ENCODE measurements at regions of chr1 and their contacts with region 1.

Region 1: GRCh38 chr1:186363891-186364290 is 11.2 kb downstream of the TPR start:
- DNase-seq: no peak
- H3K4me3 Mint-ChIP-seq: no peak overlapping the region
- H3K27ac Mint-ChIP-seq: no peak overlapping the region
- H3K4me1 Mint-ChIP-seq: peaks cover 32% of the 10 kb centered on the region
- H3K27me3 Mint-ChIP-seq: no peaks in the 10 kb centered on the region

Region 2: DNA sequence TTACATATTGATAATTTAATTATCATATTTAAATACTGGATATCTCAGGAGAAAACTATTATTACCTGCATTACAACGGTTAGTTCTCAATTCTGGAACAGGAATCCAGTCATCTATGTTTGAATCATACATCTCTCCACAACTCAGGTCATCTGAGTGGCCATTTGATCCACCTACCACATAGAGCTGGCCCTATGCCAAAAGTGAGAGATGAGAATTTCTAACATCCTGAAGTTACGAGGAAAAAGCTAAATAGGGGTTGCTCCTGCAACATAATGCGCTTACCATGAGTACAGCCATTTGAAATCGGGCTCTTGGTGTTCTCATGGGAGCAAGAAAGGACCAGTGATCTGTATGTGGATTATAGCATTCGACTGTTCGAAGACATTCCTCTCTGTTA is 1063.7 kb before region 1 on chr1:
- intact Hi-C with region 1: loop called (anchors 5 kb)
- DNase-seq: no peak
- H3K4me3 Mint-ChIP-seq: no peak overlapping the region
- H3K27ac Mint-ChIP-seq: no peak overlapping the region
- H3K4me1 Mint-ChIP-seq: peaks cover 33% of the 10 kb centered on the region
- H3K27me3 Mint-ChIP-seq: no peaks in the 10 kb centered on the region

Region 3: GRCh38 chr1:186337554-186337953 is 26.3 kb before region 1 on chr1:
- intact Hi-C with region 1: loop called (anchors 2 kb)
- DNase-seq: no peak
- H3K4me3 Mint-ChIP-seq: no peak overlapping the region
- H3K27ac Mint-ChIP-seq: no peak overlapping the region
- H3K4me1 Mint-ChIP-seq: peaks cover under 1% of the 10 kb centered on the region
- H3K27me3 Mint-ChIP-seq: no peaks in the 10 kb centered on the region